Transverse colon (tissue), 4 donors: ENCODE measurements at regions of chr16 and their contacts with region 1.

Region 1: GRCh38 chr16:50548125-50548908 is at the start of gene NKD1:
- DNase-seq: peak; percentile 74
- H3K4me3 ChIP-seq: peak within 1 kb of the TSS; percentile 59 to 86 (median 78)
- H3K27ac ChIP-seq: peak within 1 kb of the TSS; percentile 61 to 76 (median 73)
- H3K4me1 ChIP-seq: peaks cover 0 to 16% (median 3%) of the 10 kb centered on the region in 4 donors
- H3K27me3 ChIP-seq: peaks cover 30% of the 10 kb centered on the region
- CTCF ChIP-seq: no peak
- EP300 ChIP-seq: no peak
- POLR2A ChIP-seq: no peak
- total RNA-seq, gene NKD1: 1.7 to 98.1 (median 2.5) TPM

Region 2: GRCh38 chr16:50323335-50324011 is 224.8 kb before region 1 on chr16:
- in situ Hi-C with region 1: no loop called
- intact Hi-C with region 1: no loop called
- DNase-seq: no peak
- H3K4me3 ChIP-seq: no peak overlapping the region
- H3K27ac ChIP-seq: peak overlapping the region; percentile 8 to 41 (median 22)
- H3K4me1 ChIP-seq: peaks cover 0 to 10% (median 0%) of the 10 kb centered on the region in 4 donors
- H3K27me3 ChIP-seq: no peaks in the 10 kb centered on the region
- CTCF ChIP-seq: peak in 1 of 5 experiments; percentile 12
- EP300 ChIP-seq: no peak
- POLR2A ChIP-seq: no peak

Region 3: GRCh38 chr16:50509521-50510341 is 38.6 kb before region 1 on chr16:
- in situ Hi-C with region 1: no loop called
- intact Hi-C with region 1: loop called (anchors 1 kb)
- DNase-seq: peak; percentile 20
- H3K4me3 ChIP-seq: no peak overlapping the region
- H3K27ac ChIP-seq: no peak overlapping the region
- H3K4me1 ChIP-seq: no peaks in the 10 kb centered on the region
- H3K27me3 ChIP-seq: no peaks in the 10 kb centered on the region
- CTCF ChIP-seq: peak in 4 of 5 experiments; percentile 44 to 57 (median 45)
- EP300 ChIP-seq: no peak
- POLR2A ChIP-seq: no peak

Region 4: DNA sequence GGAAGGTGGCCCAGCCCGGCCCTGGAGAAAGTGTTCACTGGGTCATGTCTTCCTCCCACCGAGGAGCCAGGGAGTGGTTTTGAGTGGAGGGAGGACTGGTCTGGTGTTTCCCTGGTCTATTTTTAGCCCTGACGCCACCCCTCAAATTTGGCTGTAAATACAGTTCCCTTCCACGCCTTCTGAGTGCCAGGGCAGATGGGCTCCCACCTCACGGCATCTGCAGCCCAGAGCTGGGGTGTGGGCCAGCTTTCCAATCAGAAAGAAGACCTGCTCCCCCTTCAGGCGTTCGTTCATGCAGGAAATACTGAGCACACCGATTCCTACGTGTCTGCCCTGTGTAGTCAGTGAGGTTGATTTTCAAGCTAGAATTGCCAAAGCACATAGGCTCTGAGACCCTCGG is 79.1 kb after region 1 on chr16:
- in situ Hi-C with region 1: no loop called
- intact Hi-C with region 1: loop called (anchors 5 kb)
- DNase-seq: peak; percentile 48
- H3K4me3 ChIP-seq: no peak overlapping the region
- H3K27ac ChIP-seq: peak overlapping the region in 2 of 4 donors; percentile 10 to 50
- H3K4me1 ChIP-seq: peaks cover 0 to 15% (median 4%) of the 10 kb centered on the region in 4 donors
- H3K27me3 ChIP-seq: no peaks in the 10 kb centered on the region
- CTCF ChIP-seq: peak; percentile 12 to 40 (median 33)
- EP300 ChIP-seq: no peak
- POLR2A ChIP-seq: no peak

Region 5: GRCh38 chr16:50902457-50902856 is 354.1 kb after region 1 on chr16:
- in situ Hi-C with region 1: no loop called
- intact Hi-C with region 1: no loop called
- DNase-seq: no peak
- H3K4me3 ChIP-seq: no peak overlapping the region
- H3K27ac ChIP-seq: no peak overlapping the region
- H3K4me1 ChIP-seq: no peaks in the 10 kb centered on the region
- H3K27me3 ChIP-seq: no peaks in the 10 kb centered on the region
- CTCF ChIP-seq: no peak
- EP300 ChIP-seq: no peak
- POLR2A ChIP-seq: no peak